ENCODE measurements at regions of chrX and their contacts with region 1.

Region 1: DNA sequence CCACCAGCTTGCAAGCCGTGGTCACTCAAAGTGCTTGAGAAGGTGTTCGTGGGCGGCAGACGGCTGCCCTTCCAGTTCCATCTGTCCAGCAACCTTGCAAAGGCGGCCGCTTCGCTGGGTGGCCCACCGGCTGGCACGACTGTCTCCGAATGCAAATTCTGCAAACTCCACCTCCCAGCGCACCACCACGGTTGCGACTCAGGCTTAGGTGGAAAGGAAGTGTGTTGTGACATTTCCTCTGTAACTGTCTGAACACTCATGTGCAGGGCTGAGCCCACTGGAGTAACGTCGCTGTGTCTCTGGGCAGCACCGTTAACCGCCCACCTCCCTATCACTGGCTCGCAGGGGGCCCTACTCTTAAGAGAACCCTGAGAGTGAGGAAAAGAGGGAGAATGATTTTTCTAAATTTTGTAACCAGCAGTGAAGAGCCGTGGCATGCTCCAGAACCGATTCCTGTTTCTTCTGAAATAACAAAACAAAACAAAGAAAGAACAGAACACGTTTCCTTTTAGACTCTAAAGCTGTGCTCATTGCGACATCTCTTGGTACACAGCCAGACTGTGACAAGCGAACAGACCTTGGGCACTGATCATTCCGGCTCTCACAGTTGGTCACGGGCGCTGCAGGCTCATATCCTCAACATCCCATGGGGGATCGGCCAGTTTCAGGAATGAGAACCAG is at the start of gene P2RY8:
- DNase-seq: peak; percentile 72
- ATAC-seq: peak; percentile 76
- H3K4me3 Mint-ChIP-seq: peak within 1 kb of the TSS; percentile 98
- H3K27ac Mint-ChIP-seq: peak within 1 kb of the TSS; percentile 96
- H3K4me1 Mint-ChIP-seq: peaks cover 20% of the 10 kb centered on the region
- H3K27me3 Mint-ChIP-seq: no peaks in the 10 kb centered on the region
- CTCF ChIP-seq: no peak
- total RNA-seq, gene P2RY8: 315 and 332 TPM in 2 replicates

Region 2: DNA sequence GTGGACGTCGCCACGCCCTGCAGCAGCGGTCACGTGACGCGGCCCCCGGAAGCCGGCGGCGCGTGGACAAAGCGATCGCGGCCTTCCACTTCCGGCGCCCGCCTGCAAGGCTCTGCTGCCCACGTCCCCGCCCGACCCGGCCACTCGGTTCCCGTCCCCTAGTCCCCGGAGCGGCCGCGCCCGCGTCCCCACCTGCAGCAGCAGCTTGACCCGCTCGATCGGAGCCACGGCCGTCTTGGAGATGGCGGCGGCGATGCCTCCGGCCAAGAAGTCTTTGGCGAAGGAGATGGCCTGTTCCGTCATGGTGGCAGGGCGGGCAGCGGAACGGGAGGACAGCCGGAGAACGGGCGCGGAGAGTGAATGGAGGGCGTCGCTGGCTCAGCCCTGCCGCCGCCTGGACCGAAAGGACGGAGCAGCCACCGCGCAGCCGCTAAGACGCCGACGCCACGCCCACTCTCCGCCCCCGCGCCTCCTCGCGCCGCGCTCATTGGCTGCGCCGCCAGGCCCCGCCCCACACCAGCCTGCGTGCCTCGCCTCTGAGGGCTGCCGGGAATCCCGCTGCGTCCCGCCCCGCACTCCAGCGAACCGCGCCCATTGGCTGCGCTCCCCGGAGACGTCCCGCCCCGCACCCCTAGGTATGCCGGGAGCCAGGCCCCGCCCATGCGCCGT is 145.3 kb before region 1 on chrX and contains the start of gene SLC25A6:
- CTCF ChIA-PET with region 1: no interaction called
- POLR2A ChIA-PET with region 1: no interaction called
- intact Hi-C with region 1: loop called (anchors 1 kb)
- DNase-seq: peak; percentile 100
- ATAC-seq: peak; percentile 96
- H3K4me3 Mint-ChIP-seq: peak within 1 kb of the TSS; percentile 93
- H3K27ac Mint-ChIP-seq: peak within 1 kb of the TSS; percentile 93
- H3K4me1 Mint-ChIP-seq: peaks cover 47% of the 10 kb centered on the region
- H3K27me3 Mint-ChIP-seq: no peaks in the 10 kb centered on the region
- CTCF ChIP-seq: no peak
- total RNA-seq, gene SLC25A6: 436 and 472 TPM in 2 replicates

Region 3: DNA sequence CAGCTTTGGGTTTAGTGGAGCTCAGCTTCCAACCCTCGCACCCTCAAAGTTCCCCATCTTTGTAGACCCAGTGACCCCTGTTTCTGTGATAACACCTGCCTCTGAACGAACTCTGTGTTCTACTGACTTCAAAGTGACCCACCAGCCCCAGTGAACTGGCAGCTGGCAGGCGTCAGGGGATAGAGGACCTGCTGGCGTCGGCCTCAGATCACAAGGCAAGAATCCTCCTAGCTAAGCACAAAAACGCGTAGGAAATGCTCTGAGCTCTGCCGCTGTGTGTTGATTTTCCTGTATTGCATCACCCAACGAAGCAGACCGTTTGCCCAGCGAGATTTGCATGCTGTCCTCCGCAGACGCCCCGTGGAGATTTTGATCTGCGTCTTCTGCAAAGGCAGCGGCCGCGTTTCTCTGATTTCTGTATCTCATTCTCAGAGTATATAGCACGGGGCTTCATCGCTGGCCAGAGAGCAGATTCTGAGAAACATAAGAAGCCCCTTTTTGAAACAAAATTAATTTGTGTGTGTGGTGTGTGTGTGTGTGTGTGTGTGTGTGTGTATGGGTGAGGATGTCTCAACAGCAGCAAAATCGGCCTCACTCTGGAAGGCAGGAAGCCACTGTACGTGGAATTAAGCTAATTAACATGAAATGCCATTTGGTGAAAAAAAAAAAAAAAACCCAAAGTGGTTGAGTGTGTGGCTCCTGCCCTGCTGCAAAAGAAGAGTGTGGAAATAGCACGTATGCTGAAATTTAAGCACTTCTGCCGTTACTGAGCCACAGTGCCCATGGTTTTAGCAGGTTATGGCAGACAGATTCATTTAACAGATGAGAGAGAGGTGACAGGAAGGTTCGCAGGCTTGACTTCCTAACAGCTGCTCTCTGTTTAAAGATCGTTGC is 55.3 kb before region 1 on chrX:
- CTCF ChIA-PET with region 1: no interaction called
- POLR2A ChIA-PET with region 1: no interaction called
- intact Hi-C with region 1: loop called (anchors 1 kb)
- DNase-seq: peak; percentile 63
- ATAC-seq: peak; percentile 53
- H3K4me3 Mint-ChIP-seq: peak overlapping the region; percentile 81
- H3K27ac Mint-ChIP-seq: peak overlapping the region; percentile 97
- H3K4me1 Mint-ChIP-seq: peaks cover 90% of the 10 kb centered on the region
- H3K27me3 Mint-ChIP-seq: no peaks in the 10 kb centered on the region
- CTCF ChIP-seq: no peak

Region 4: GRCh38 chrX:1502241-1502640 is 34.9 kb before region 1 on chrX:
- CTCF ChIA-PET with region 1: no interaction called
- POLR2A ChIA-PET with region 1: no interaction called
- intact Hi-C with region 1: loop called (anchors 1 kb)
- DNase-seq: peak; percentile 73
- ATAC-seq: peak; percentile 85
- H3K4me3 Mint-ChIP-seq: peak overlapping the region; percentile 66
- H3K27ac Mint-ChIP-seq: no peak overlapping the region
- H3K4me1 Mint-ChIP-seq: peaks cover 25% of the 10 kb centered on the region
- H3K27me3 Mint-ChIP-seq: no peaks in the 10 kb centered on the region
- CTCF ChIP-seq: no peak

Region 5: DNA sequence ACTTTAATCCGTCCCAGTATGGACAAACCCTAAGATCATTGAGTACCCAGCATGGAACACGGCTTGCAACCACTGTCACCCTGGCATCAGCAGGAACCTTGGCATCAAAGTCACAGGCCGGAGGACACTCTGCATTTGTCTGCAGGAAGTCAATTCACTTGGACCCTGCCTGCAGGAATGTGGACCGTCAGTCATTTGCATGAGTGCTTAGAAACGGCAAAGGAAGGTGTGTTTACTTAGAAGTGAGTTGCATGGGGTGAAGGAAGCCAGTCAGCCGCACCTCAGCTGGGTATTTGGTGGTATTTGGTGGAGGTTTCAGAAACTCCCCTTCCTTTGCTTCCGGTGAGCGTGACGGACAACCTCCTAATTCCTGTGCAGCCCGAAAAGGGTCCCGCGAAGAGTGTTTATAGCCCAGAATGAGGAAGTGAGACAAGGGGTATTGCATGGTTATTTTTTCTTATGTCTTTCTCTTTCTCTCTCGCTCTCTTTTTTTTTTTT is 15.7 kb before region 1 on chrX:
- CTCF ChIA-PET with region 1: no interaction called
- POLR2A ChIA-PET with region 1: no interaction called
- intact Hi-C with region 1: loop called (anchors 1 kb)
- DNase-seq: peak; percentile 66
- ATAC-seq: peak; percentile 85
- H3K4me3 Mint-ChIP-seq: peak overlapping the region; percentile 83
- H3K27ac Mint-ChIP-seq: peak overlapping the region; percentile 97
- H3K4me1 Mint-ChIP-seq: peaks cover 64% of the 10 kb centered on the region
- H3K27me3 Mint-ChIP-seq: no peaks in the 10 kb centered on the region
- CTCF ChIP-seq: no peak

Region 6: DNA sequence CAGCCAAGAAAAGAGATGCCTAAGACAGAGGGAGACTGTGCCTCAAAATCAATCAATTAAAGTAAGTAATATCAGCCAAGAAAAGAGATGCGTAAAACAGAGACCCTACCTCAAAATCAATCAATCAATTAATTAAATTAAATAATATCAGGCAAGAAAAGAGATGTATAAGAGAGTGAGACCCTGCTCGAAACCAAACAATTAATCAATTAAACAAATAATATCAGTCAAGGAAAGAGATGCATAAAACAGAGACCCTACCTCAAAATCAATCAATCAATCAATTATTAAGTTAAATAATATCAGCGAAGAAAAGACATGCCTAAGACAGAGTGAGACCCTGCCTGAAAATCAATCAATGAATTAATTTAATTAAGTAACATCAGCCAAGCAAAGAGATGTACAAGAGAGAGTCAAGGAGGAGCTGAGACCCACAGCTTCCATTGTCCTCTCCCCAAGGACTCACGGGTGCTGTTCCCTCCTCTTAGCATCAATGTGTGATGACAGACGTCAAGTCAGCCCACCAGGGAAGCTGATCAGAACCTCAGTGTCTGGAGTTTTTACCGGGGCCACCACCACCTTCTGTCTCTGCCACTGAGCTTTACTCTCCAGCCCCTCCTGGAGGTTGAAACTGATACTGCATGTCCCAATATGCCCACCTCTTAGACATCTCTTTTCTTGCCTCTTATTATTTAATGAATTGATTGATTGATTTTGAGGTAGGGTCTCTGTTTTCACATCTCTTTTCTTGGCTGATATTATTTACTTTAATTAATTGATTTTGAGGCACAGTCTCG is 43.8 kb after region 1 on chrX:
- CTCF ChIA-PET with region 1: no interaction called
- POLR2A ChIA-PET with region 1: no interaction called
- intact Hi-C with region 1: loop called (anchors 1 kb)
- DNase-seq: no peak
- ATAC-seq: peak; percentile 80
- H3K4me3 Mint-ChIP-seq: no peak overlapping the region
- H3K27ac Mint-ChIP-seq: no peak overlapping the region
- H3K4me1 Mint-ChIP-seq: peaks cover 27% of the 10 kb centered on the region
- H3K27me3 Mint-ChIP-seq: no peaks in the 10 kb centered on the region
- CTCF ChIP-seq: peak; percentile 51

Region 7: DNA sequence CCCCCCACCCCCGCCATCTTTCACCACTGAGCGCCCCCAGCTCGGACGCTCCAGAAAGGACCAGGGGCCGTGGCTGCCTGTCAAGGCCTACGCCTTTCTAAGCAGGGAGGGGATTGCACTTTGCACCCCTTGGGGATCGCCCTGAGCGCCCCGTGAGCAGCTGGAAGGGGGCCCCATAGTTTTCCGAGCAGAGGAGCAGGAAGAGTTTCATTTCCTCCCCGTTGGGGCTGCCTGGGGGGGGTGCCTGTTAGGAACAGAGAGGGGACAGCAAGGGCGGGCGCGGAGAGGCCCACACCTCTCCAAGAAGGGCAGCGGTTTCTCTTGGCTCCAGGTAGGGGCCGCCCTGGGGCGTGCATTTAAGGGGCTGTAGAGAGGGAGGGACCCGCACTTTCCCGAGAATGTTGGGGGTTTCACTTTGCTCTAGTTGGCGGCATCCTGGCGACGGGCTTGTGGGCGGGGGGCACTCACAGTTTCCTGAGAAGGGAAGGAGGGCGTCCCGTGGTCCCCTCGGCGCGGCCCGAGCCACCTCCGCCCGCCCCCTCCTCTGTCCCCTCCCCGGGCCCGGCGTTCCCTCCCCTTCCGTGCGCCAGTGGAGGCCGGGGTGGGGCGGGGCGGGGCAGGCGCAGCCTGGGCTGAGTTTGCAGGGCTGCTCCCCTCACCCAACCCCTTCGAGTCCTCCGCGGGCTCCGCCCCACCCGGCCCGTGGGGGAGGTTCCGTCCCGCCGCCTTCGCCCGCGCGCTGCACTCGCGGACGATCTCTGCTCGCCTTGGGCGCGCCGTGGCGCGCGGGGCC is 1071.7 kb after region 1 on chrX:
- CTCF ChIA-PET with region 1: no interaction called
- POLR2A ChIA-PET with region 1: no interaction called
- intact Hi-C with region 1: loop called (anchors 10 kb)
- DNase-seq: peak; percentile 84
- ATAC-seq: peak; percentile 97
- H3K4me3 Mint-ChIP-seq: peak overlapping the region; percentile 93
- H3K27ac Mint-ChIP-seq: peak overlapping the region; percentile 81
- H3K4me1 Mint-ChIP-seq: peaks cover 36% of the 10 kb centered on the region
- H3K27me3 Mint-ChIP-seq: no peaks in the 10 kb centered on the region
- CTCF ChIP-seq: no peak

Measured in activated B cell treated with CpG ODN at 0.5 μM for 24 hours (primary cell).